ENCODE measurements at regions of chr10 and their contacts with region 1.

Region 1: DNA sequence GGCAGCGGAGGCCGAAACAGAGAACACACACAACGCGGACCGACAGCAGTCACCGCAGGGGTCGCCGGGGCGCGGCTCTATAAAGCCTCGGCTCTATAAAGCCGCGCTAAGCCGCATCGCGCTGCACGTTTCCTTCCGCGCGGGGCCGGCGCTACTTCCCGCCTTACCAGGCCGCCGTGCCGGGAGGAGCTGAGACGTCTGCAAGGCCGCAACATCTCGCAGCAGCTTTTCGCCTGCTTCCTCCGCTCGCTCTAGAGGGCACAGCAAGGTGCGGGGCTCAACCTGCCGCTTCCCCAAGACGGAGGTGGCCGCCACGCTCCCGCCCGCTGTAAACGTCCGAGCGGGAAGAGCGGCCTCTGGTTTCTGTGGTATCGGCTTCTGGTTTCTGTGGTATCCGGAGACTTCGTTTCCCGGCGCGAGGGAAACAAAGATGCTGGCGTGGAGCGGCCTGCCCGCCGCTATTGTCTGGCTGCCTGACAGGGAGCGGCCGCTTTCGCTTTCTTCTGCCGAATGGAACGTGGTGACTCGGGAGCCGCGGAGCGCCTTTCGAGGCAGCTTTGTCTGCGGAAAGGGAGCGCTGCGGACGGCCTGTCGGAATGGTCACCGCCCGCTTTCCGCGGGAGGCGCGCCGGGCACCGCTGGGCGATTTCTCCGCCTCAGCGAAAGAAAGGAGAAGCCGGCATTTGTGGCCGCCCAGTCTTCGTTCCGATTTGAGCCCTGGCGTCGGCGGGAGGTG is 91.8 kb downstream of the SPAG6 start:
- DNase-seq: peak; percentile 80
- H3K4me3 Mint-ChIP-seq: peak overlapping the region; percentile 91
- H3K27ac Mint-ChIP-seq: peak overlapping the region; percentile 96
- H3K4me1 Mint-ChIP-seq: peaks cover 49% of the 10 kb centered on the region
- H3K27me3 Mint-ChIP-seq: peaks cover 9% of the 10 kb centered on the region

Region 2: DNA sequence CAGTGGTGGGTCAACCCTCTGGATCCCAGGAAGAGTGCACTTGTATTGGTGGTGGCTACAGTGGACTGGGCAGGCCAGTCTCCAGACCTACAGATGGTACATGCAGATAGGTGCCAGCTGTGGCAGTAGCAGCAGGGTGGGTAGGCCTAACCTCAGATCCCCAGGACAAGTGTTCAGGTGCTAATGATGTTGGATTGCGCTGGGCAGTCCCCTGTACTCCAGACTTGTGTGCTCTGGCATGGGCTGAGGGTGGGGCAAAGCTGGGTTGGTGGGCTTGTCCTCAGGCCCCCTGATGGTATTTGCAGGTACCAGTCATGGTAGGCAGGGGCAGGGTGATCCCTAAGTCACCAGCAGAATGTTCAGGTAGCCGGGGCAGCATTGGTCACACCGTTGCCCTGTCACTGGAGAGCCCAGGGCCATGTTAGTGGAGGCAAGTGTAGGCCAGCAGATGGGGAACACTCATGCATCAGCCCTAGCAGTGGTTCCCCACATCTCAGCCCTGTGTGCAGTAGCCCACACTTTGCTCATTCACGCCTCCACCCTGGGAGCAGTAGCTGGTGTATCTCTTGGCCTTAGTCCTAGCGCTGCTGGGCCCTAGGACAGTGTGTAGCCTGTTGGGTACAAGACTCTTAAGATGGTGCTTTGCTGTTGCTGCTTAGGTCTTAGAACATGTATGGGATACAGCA is 731.8 kb before region 1 on chr10:
- intact Hi-C with region 1: no loop called
- DNase-seq: no peak
- H3K4me3 Mint-ChIP-seq: no peak overlapping the region
- H3K27ac Mint-ChIP-seq: no peak overlapping the region
- H3K4me1 Mint-ChIP-seq: peaks cover 21% of the 10 kb centered on the region
- H3K27me3 Mint-ChIP-seq: peaks cover 4% of the 10 kb centered on the region

Region 3: GRCh38 chr10:22228943-22229801 is 207.9 kb before region 1 on chr10:
- intact Hi-C with region 1: loop called (anchors 5 kb)
- DNase-seq: peak; percentile 77
- H3K4me3 Mint-ChIP-seq: peak overlapping the region; percentile 92
- H3K27ac Mint-ChIP-seq: peak overlapping the region; percentile 98
- H3K4me1 Mint-ChIP-seq: peaks cover 32% of the 10 kb centered on the region
- H3K27me3 Mint-ChIP-seq: peaks cover 11% of the 10 kb centered on the region

Region 4: DNA sequence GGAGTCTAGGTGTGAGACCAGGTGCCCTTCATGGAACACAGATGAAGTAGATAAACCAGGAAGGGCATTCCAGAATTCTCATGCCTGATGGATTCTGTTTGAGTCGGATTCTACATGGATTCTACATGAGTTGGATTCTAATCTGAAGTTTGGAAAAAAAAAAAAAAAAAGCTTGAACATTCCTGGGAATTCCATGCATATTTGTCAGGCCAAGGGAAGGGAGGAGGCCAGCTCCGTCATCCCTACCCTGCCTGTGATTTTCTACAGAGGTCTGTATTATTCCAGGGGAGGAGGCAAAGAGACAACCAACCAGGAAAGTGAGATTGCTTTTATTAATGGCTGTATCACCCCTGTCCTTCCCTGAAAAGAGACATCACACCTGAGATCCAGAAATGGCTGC is 191.5 kb before region 1 on chr10:
- intact Hi-C with region 1: loop called (anchors 2 kb)
- DNase-seq: no peak
- H3K4me3 Mint-ChIP-seq: no peak overlapping the region
- H3K27ac Mint-ChIP-seq: no peak overlapping the region
- H3K4me1 Mint-ChIP-seq: peaks cover 38% of the 10 kb centered on the region
- H3K27me3 Mint-ChIP-seq: no peaks in the 10 kb centered on the region

Region 5: DNA sequence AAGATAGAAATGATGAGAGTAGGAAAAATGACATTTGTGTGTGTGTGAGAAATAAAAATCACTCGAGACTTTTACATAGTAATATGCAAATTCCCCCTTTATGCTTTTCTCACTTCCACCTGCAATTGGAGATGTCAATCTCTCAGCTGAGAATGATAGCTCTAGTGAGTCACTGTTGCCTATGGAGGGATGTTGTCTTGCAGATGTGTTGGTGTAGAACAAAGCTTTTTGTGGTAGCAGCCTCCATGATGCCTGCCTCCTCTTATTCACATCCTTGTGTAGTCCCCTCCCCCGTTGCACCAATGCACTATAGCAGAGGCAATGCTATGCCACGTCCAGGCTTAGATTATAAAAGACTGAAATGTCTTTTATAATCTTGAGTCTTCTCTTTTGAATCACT is 58.0 kb before region 1 on chr10:
- intact Hi-C with region 1: loop called (anchors 1 kb)
- DNase-seq: peak; percentile 7
- H3K4me3 Mint-ChIP-seq: peak overlapping the region; percentile 27
- H3K27ac Mint-ChIP-seq: peak overlapping the region; percentile 81
- H3K4me1 Mint-ChIP-seq: peaks cover 30% of the 10 kb centered on the region
- H3K27me3 Mint-ChIP-seq: peaks cover 3% of the 10 kb centered on the region

Region 6: GRCh38 chr10:22475651-22476600 is 38.9 kb after region 1 on chr10:
- intact Hi-C with region 1: loop called (anchors 2 kb)
- DNase-seq: peak; percentile 3
- H3K4me3 Mint-ChIP-seq: peak overlapping the region; percentile 86
- H3K27ac Mint-ChIP-seq: peak overlapping the region; percentile 86
- H3K4me1 Mint-ChIP-seq: peaks cover 20% of the 10 kb centered on the region
- H3K27me3 Mint-ChIP-seq: peaks cover 61% of the 10 kb centered on the region

Region 7: GRCh38 chr10:22655311-22655981 is 218.4 kb after region 1 on chr10:
- intact Hi-C with region 1: loop called (anchors 5 kb)
- DNase-seq: no peak
- H3K4me3 Mint-ChIP-seq: peak overlapping the region; percentile 72
- H3K27ac Mint-ChIP-seq: peak overlapping the region; percentile 94
- H3K4me1 Mint-ChIP-seq: peaks cover 95% of the 10 kb centered on the region
- H3K27me3 Mint-ChIP-seq: no peaks in the 10 kb centered on the region

Region 8: DNA sequence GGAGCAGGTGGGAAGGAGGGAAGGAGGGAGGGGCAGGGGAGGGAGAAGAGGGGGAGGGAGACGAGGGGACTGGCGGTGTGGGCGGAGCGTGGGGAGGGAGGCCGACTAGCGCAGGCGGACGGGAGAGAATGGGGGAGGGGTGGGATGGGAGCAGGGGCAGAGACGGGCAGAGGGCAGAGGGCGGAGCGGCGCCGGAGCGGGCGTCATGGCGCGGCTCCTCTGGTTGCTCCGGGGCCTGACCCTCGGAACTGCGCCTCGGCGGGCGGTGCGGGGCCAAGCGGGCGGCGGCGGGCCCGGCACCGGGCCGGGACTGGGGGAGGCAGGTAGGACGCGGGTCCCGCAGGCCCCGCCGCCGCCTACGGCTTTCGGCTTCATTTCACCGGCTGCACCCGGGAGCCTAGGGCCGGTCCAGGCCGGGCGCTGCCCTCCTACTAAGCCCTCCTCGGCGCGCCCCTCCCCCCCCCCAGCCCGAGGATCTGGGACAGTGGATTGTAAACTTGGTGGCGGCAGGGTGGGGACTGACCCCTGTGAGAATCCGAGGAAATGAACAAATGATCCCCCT is 658.4 kb after region 1 on chr10 and contains the start of gene MSRB2:
- intact Hi-C with region 1: loop called (anchors 5 kb)
- DNase-seq: peak; percentile 64
- H3K4me3 Mint-ChIP-seq: peak within 1 kb of the TSS; percentile 92
- H3K27ac Mint-ChIP-seq: peak within 1 kb of the TSS; percentile 91
- H3K4me1 Mint-ChIP-seq: peaks cover 36% of the 10 kb centered on the region
- H3K27me3 Mint-ChIP-seq: peaks cover 6% of the 10 kb centered on the region
- total RNA-seq, gene MSRB2: 3.0 and 4.0 TPM in 2 replicates

Measured in activated T-helper 1 cell treated with anti-CD3 and anti-CD28 coated beads, Interleukin-12 subunit alpha, Interleukin-12 subunit beta, Interleukin-2, Interleukin-4 antibody, amounts not matched to agents 30 ng/mL and 10 ng/mL and 1 ng/mL, durations not matched to agents 14 hours and 24 hours and 36 hours (primary cell).